CD4-positive, alpha-beta memory T cell (primary cell): ENCODE measurements at regions of chr1 and their contacts with region 1.

Region 1: DNA sequence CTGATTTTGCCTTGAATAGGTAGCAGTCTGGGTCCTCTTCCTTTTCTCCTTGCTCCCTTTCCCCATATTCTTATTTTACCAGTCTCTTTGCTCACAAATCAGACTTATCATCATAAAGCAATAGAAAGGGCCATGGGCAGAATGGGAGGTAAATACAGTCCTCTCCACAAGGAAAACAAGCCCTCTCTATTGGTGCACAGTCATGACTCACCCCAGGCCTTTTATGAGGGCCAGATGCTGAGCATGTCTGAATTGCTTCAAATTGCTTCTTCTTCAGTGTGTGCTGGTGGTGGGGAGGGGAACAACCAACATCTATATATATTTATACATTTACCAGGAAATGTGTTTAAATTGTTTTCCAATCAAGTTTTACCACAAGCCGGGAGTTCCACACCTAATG is 75.2 kb downstream of the GFI1 start:
- DNase-seq: no peak
- H3K4me3 ChIP-seq: no peak overlapping the region
- H3K4me3 Mint-ChIP-seq: peak overlapping the region in 6 of 8 donors; percentile 18 to 71 (median 42)
- H3K27ac ChIP-seq: no peak overlapping the region
- H3K27ac Mint-ChIP-seq: peak overlapping the region in 4 of 7 donors; percentile 2 to 54 (median 14)
- H3K4me1 ChIP-seq: peaks cover 29% of the 10 kb centered on the region
- H3K4me1 Mint-ChIP-seq: peaks cover 33 to 54% (median 37%) of the 10 kb centered on the region in 4 donors
- H3K27me3 ChIP-seq: no peaks in the 10 kb centered on the region
- H3K27me3 Mint-ChIP-seq: no peaks in the 10 kb centered on the region

Region 2: DNA sequence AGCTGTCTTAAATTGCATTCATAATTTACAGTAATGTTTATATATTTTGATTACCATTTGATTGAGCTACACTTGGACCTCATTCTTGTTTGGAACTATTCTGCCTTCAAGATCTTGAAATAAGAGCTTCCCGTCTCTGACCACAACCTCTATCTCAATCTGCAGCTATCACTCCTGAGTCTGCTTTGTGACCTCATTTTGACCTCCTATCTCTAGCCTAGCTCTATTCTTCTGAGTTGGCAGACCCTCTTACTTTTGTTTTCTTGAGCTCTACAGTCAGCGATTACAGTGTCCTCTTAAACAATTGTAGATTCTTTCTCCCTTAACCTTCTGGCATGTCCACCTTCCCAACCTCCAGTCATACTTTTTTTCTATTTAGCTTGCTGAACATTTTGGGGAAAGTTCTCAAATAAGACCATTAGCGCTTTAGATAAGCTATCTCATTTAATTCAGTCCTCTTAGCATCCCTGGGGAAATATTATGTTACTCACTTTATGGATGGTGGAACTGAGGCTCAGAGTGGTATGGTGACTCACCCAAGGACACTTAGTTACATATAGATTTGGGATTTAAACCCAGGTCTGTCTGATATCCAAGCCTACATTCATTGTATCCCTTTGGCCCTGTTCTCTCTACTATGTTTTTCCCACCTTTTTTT is 93.5 kb before region 1 on chr1:
- CTCF ChIA-PET with region 1: interaction called, 12 read pairs
- POLR2A ChIA-PET with region 1: interaction called, 5 read pairs
- intact Hi-C with region 1: loop called (anchors 5 kb)
- DNase-seq: peak; percentile 27 to 56 (median 40)
- H3K4me3 ChIP-seq: no peak overlapping the region
- H3K4me3 Mint-ChIP-seq: peak overlapping the region; percentile 55 to 79 (median 62)
- H3K27ac ChIP-seq: peak overlapping the region; percentile 36
- H3K27ac Mint-ChIP-seq: peak overlapping the region; percentile 59 to 94 (median 90)
- H3K4me1 ChIP-seq: peaks cover 63% of the 10 kb centered on the region
- H3K4me1 Mint-ChIP-seq: peaks cover 39 to 61% (median 48%) of the 10 kb centered on the region in 4 donors
- H3K27me3 ChIP-seq: no peaks in the 10 kb centered on the region
- H3K27me3 Mint-ChIP-seq: no peaks in the 10 kb centered on the region